Activated CD4-positive, alpha-beta T cell treated with anti-CD3 and anti-CD28 coated beads, Interleukin-2, amount 10 ng/mL, durations not matched to agents 24 days and 14 days (primary cell): ENCODE measurements at regions of chr14 and their contacts with region 1.

Region 1: GRCh38 chr14:56339855-56340701 is 221.9 kb downstream of the PELI2 start:
- DNase-seq: peak; percentile 87
- H3K4me3 Mint-ChIP-seq: no peak overlapping the region
- H3K27ac Mint-ChIP-seq: no peak overlapping the region
- H3K4me1 Mint-ChIP-seq: peaks cover 9% of the 10 kb centered on the region
- H3K27me3 Mint-ChIP-seq: no peaks in the 10 kb centered on the region

Region 2: DNA sequence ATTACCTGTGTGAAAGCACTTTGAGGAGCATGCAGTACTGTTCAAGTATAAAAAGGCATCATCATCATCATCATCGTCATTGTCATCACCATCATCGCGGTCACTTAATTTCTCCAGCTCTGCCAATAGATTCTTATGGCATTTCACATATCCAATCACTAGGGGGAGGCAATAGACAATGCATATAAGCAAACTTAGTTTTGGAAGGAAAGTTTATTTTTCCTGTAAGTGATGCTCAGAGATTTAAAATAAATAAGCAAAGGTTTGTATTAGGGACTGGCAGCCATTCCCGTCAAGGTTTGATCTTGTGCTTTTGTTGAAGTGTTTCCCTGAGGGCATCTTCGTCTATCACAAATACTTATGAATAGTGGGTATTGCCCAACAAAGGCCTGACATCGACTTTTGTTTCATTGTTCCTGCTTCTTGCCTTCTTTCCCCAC is 632.7 kb before region 1 on chr14:
- intact Hi-C with region 1: loop called (anchors 5 kb)
- DNase-seq: no peak
- H3K4me3 Mint-ChIP-seq: no peak overlapping the region
- H3K27ac Mint-ChIP-seq: no peak overlapping the region
- H3K4me1 Mint-ChIP-seq: peaks cover 2% of the 10 kb centered on the region
- H3K27me3 Mint-ChIP-seq: no peaks in the 10 kb centered on the region

Region 3: GRCh38 chr14:55731881-55732498 is 608.1 kb before region 1 on chr14:
- intact Hi-C with region 1: loop called (anchors 2 kb)
- DNase-seq: peak; percentile 86
- H3K4me3 Mint-ChIP-seq: no peak overlapping the region
- H3K27ac Mint-ChIP-seq: no peak overlapping the region
- H3K4me1 Mint-ChIP-seq: peaks cover 15% of the 10 kb centered on the region
- H3K27me3 Mint-ChIP-seq: peaks cover 2% of the 10 kb centered on the region

Region 4: GRCh38 chr14:55864890-55865655 is 475.0 kb before region 1 on chr14:
- intact Hi-C with region 1: loop called (anchors 5 kb)
- DNase-seq: peak; percentile 58
- H3K4me3 Mint-ChIP-seq: no peak overlapping the region
- H3K27ac Mint-ChIP-seq: no peak overlapping the region
- H3K4me1 Mint-ChIP-seq: peaks cover 5% of the 10 kb centered on the region
- H3K27me3 Mint-ChIP-seq: peaks cover 15% of the 10 kb centered on the region

Region 5: GRCh38 chr14:56300495-56300894 is 39.6 kb before region 1 on chr14:
- intact Hi-C with region 1: no loop called
- DNase-seq: no peak
- H3K4me3 Mint-ChIP-seq: no peak overlapping the region
- H3K27ac Mint-ChIP-seq: no peak overlapping the region
- H3K4me1 Mint-ChIP-seq: no peaks in the 10 kb centered on the region
- H3K27me3 Mint-ChIP-seq: no peaks in the 10 kb centered on the region